ENCODE measurements at regions of chr16 and their contacts with region 1.

Region 1: DNA sequence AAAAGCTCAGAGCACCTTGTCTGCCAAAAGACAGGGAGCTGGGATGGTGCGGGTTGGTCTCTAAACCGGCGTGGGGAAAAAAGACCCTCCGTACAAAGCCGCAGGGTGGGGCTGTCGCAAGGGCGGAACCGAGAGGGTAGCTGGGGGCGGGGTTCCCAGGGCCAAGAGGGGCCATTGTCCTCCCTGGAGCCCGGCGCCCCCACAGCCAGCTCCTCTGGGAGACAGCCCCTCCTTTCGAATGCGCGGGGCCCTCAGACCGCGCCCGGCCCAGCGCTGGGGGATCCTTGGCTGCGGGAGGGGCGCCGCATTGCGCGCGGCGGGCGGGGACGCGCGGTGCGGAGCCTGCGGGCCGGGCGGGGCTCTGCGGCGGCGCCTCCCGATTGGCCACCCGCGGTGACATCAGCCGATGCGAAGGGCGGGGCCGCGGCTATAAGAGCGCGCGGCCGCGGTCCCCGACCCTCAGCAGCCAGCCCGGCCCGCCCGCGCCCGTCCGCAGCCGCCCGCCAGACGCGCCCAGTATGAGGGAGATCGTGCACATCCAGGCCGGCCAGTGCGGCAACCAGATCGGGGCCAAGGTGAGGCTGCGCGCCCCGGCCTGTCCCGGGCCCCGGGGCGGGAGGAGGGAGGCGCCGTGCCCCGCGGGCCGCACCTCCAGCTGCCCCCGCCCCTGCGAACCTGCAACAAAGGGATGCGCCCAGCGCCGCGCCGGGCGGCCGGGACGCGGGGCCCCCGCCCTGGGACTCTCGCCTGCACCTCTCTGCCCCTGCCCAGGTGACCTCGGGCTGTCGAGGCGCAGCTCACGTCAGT is at the start of gene TUBB3:
- DNase-seq: peak; percentile 71
- H3K4me3 Mint-ChIP-seq: peak within 1 kb of the TSS; percentile 60
- H3K27ac Mint-ChIP-seq: no peak within 1 kb of the TSS
- H3K4me1 Mint-ChIP-seq: peaks cover 53% of the 10 kb centered on the region
- H3K27me3 Mint-ChIP-seq: peaks cover 88% of the 10 kb centered on the region

Region 2: DNA sequence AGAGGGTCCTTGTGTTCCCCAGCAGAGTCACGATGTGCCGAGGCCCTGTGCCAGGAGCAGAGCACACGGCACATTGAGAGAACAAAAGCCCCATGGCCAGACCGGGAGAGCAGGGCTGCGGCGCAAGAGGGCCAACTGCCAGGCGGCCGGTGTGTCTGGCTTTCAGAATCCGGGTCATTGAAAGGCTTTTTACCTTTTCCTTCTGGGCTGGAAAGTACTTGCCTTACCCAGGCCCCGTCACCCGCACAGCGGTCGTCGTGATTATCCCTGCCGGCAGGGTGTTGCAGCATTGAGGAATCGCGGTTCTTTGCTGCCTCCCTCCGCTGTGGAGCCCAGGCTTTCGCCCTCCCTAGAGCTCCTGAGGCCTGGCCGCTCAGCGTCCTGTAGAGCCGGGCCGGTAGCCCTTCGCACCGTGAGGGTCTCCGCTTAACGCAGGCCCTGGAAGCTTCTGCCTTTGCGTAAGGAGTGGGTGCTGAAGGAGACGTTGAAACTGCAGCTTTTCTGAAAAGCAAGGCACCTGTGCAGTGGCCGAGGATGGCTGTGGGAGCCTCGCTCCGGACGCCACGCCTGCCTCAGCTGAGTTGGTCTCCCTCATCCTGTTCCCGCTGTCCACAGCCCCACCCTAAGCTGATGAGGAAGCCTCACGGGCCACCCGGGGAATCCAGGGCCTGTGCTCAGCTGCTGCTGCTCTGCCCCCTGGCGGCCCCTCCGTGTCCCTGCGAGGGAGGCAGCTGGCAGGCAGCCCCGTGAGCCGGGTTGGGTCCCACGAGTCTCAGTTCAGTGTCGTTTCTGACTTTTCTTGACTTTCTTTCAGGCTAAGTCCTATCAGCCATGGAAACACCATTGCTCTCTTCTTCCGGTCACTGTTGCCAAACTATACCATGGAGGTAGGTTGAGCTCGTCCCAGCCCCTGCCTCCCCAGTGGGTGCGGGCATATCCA is 13.0 kb before region 1 on chr16:
- CTCF ChIA-PET with region 1: interaction called, 16 read pairs
- DNase-seq: peak; percentile 76
- H3K4me3 Mint-ChIP-seq: no peak overlapping the region
- H3K27ac Mint-ChIP-seq: no peak overlapping the region
- H3K4me1 Mint-ChIP-seq: peaks cover 4% of the 10 kb centered on the region
- H3K27me3 Mint-ChIP-seq: no peaks in the 10 kb centered on the region

Measured in activated naive CD4-positive, alpha-beta T cell treated with anti-CD3 and anti-CD28 coated beads, Interleukin-2, amount 10 ng/mL, durations not matched to agents 7 days and 5 days (primary cell).